ENCODE measurements at regions of chr20 and their contacts with region 1.

Region 1: DNA sequence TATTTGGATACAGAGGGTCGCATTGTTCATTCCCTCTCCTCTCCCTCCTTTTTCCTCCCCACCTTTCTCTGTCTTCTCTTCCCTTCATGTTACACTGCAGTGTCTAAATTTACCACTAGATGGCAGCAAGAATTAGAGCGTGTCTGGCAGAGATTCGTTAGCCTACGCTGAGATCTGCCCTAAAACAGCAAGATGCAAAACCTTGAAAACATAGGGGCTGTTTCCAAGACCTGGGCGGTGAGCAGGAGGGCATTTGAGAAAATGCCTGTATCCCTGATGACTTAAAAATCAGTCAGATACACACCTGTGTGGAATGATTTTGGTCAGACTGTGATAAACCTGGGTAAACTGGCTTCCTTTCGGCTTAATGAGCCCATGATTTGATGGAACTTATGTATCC is 101.5 kb upstream of the ISM1 start:
- DNase-seq: peak; percentile 16
- H3K4me3 Mint-ChIP-seq: no peak overlapping the region
- H3K27ac Mint-ChIP-seq: no peak overlapping the region
- H3K4me1 Mint-ChIP-seq: no peaks in the 10 kb centered on the region
- H3K27me3 Mint-ChIP-seq: peaks cover 6% of the 10 kb centered on the region

Region 2: DNA sequence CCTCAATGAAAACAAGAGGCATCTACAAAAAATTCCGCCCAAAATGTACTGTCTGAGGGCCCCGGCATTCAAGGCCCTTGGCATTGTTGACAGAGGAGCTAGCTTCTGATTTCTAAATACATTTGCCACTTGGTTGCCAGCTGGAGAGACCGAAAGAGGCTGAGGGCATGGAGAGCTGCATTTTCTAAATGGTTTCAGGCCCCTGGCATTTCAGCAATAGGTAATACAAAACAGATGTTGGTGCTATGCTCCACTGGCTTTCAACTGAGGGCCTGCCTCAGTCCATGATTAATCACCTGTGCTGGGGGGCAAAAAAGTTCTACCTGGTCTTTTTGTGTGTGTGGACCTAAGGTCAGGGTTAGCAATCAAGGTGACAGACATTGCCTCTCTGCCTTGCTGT is 22.0 kb after region 1 on chr20:
- intact Hi-C with region 1: no loop called
- DNase-seq: no peak
- H3K4me3 Mint-ChIP-seq: no peak overlapping the region
- H3K27ac Mint-ChIP-seq: no peak overlapping the region
- H3K4me1 Mint-ChIP-seq: no peaks in the 10 kb centered on the region
- H3K27me3 Mint-ChIP-seq: peaks cover 2% of the 10 kb centered on the region

Region 3: DNA sequence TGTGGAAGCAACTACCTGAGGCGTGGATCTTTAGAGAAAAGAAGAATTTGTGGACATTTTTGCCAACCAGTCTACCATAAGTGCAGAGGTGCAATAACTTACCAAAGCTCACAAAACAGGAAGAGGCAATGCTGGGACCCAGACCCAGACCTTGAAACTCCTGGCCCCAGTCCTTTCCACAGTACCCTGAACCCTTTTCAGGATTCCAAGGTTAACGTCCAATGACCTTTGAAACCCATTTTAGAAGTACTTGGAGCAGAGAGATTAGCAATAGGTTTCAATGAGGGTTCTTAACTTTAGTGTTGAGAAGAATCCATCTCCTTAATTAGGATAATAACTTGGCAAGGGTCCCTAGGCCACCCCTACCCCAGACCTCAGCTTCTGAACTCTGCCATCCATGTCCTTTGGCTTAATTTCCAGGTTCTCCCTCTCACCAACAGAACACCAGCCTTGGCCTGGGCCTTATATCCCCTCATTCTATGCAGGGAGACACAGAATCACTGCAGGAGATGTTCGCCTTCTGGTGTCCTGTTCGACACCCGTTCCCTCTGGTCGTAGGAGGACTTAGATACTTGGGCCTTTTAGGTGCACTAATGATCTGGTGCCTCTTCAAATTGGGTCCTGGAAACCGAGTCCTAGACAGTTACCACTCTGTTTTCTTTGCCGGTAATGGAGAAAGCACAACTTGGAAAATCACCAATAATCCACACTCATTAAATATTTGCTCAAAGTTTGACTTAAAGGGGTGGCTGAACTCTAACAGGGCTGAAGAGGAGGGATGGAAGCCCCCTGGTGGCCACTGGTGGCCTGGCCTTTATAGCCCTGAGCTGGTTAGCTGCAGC is 142.1 kb after region 1 on chr20:
- intact Hi-C with region 1: loop called (anchors 1 kb)
- DNase-seq: peak; percentile 20
- H3K4me3 Mint-ChIP-seq: no peak overlapping the region
- H3K27ac Mint-ChIP-seq: no peak overlapping the region
- H3K4me1 Mint-ChIP-seq: no peaks in the 10 kb centered on the region
- H3K27me3 Mint-ChIP-seq: no peaks in the 10 kb centered on the region

Region 4: DNA sequence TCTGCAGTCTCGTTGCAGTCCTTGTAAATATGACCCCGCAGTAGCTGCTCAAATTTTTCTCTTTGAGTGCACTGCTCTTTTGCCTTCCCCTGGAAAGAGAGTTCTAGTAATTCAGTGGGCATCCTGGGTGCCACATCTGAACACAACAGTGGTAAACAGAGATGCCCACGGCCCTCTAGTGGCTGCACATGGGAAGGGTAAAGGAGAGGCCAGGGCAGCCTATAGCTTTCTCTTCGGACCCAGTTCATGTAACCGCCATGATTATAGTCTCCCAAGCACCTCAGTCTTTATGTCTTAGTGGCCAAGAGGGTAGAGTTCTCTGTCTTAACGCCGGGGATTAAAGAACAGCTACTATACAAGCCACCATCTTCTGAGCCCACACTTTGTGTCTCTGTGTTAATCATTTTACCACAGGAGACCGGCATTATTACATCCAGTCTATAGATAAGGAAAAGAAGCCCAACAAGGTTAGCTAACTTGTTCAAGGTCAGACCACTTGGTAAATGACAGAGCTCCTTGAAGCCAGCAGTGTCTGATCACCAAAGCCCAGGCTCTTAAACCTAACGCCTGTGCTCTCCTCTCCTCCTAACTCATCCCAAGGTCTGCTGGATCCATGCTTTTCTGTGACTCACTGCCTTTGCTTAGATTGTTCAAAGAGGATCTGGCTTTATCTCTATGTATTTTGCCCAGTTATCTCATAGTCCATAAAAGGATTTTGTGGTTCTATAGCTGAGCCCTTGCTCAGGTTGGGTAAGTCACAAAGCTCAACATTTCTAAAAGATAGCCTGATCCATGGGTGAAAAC is 183.3 kb after region 1 on chr20:
- intact Hi-C with region 1: loop called (anchors 1 kb)
- DNase-seq: peak; percentile 13
- H3K4me3 Mint-ChIP-seq: no peak overlapping the region
- H3K27ac Mint-ChIP-seq: no peak overlapping the region
- H3K4me1 Mint-ChIP-seq: no peaks in the 10 kb centered on the region
- H3K27me3 Mint-ChIP-seq: no peaks in the 10 kb centered on the region

Region 5: GRCh38 chr20:13525225-13525940 is 405.8 kb after region 1 on chr20:
- intact Hi-C with region 1: no loop called
- DNase-seq: no peak
- H3K4me3 Mint-ChIP-seq: no peak overlapping the region
- H3K27ac Mint-ChIP-seq: no peak overlapping the region
- H3K4me1 Mint-ChIP-seq: no peaks in the 10 kb centered on the region
- H3K27me3 Mint-ChIP-seq: no peaks in the 10 kb centered on the region

Region 6: DNA sequence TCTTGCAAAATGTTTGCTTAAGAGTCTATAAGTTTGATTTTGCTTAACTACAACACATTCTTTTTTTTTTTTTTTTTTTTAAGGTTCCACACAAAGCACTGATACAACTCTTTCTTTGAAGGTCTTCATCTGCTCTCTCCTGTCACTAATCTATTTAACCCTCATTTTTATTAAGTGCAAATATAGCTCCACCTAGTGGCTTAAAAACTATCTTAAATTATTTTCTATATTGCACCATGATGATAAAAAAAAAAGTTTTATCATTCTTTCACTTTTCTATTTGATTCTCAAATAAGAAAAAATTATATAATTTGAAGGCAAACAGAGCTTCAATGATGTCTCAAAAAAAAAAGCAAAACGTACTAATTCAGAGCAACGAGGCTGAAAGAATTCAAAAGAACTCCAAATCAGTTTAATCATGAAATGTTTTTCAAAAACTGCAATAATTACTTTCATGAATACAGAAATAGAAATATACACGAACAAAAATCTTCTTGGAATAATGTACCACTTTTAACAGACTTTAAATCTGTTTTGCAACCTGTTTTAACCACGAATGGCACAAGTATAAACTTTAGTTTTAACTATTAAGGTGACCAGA is 652.4 kb after region 1 on chr20:
- intact Hi-C with region 1: loop called (anchors 1 kb)
- DNase-seq: no peak
- H3K4me3 Mint-ChIP-seq: no peak overlapping the region
- H3K27ac Mint-ChIP-seq: no peak overlapping the region
- H3K4me1 Mint-ChIP-seq: peaks cover 11% of the 10 kb centered on the region
- H3K27me3 Mint-ChIP-seq: no peaks in the 10 kb centered on the region